Sciatic nerve (tissue), 2 donors: ENCODE measurements at regions of chr1 and their contacts with region 1.

Region 1: GRCh38 chr1:203756021-203756420 is 9.0 kb upstream of the LAX1 start:
- DNase-seq: no peak
- ATAC-seq: no peak

Region 2: GRCh38 chr1:203726417-203726867 is 29.6 kb before region 1 on chr1:
- intact Hi-C with region 1: loop called (anchors 1 kb)
- DNase-seq: no peak
- ATAC-seq: no peak